Esophagus squamous epithelium (tissue), 5 donors: ENCODE measurements at regions of chr16 and their contacts with region 1.

Region 1: DNA sequence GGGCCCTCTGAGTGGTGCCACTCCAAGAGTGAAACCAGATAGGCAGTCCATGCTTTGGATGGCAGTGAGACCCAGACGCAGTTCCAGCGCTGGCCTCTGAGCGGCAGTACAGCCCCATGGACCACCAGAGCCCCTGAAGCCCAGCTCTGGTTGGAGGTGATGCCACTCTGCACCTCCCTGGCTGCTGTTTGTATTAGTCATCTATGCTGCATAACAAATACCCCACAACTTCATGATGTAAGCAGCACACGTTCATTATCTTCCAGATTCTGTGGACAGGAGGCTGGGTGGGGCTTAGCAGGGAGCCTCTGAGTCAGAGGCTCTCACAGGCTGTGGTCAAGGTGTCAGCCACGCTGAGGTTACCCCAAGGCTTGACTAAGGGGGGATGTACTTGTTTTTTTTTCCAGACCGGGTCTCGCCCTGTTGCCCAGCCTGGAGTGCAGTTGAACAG is 5.1 kb upstream of the NME4 start:
- DNase-seq: no peak
- H3K4me3 ChIP-seq: no peak overlapping the region
- H3K27ac ChIP-seq: no peak overlapping the region
- H3K4me1 ChIP-seq: peaks cover 0 to 22% (median 0%) of the 10 kb centered on the region in 3 donors
- H3K27me3 ChIP-seq: no peaks in the 10 kb centered on the region
- CTCF ChIP-seq: peak in 5 of 6 experiments; percentile 43 to 78 (median 59)
- POLR2A ChIP-seq: no peak

Region 2: DNA sequence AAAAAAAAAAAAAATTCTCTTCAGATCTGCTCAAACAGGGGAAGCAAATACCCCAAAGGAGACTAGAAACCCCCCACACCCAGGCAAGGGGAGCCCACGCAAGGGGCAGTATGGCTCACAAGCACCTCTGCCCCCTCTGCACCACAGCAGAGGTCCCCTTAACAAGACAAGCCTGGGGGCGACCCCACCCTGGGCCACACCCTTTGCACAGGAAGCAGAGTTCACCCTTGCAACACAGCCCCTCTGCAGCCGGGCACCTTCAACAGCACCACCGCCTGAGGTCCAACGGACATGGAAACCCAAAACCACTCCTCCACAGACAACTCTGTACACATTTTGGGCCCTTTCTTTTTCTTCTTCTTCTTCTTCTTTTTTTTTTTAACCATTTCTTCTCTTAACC is 52.2 kb before region 1 on chr16:
- intact Hi-C with region 1: no loop called
- DNase-seq: no peak
- H3K4me3 ChIP-seq: no peak overlapping the region
- H3K27ac ChIP-seq: no peak overlapping the region
- H3K4me1 ChIP-seq: peaks cover 0 to 48% (median 8%) of the 10 kb centered on the region in 3 donors
- H3K27me3 ChIP-seq: no peaks in the 10 kb centered on the region
- CTCF ChIP-seq: no peak
- POLR2A ChIP-seq: no peak

Region 3: GRCh38 chr16:495127-495748 is 103.3 kb after region 1 on chr16:
- intact Hi-C with region 1: loop called (anchors 10 kb)
- DNase-seq: no peak
- H3K4me3 ChIP-seq: no peak overlapping the region
- H3K27ac ChIP-seq: no peak overlapping the region
- H3K4me1 ChIP-seq: no peaks in the 10 kb centered on the region
- H3K27me3 ChIP-seq: no peaks in the 10 kb centered on the region
- CTCF ChIP-seq: peak in 3 of 6 experiments; percentile 12 to 46 (median 12)
- POLR2A ChIP-seq: no peak

Region 4: DNA sequence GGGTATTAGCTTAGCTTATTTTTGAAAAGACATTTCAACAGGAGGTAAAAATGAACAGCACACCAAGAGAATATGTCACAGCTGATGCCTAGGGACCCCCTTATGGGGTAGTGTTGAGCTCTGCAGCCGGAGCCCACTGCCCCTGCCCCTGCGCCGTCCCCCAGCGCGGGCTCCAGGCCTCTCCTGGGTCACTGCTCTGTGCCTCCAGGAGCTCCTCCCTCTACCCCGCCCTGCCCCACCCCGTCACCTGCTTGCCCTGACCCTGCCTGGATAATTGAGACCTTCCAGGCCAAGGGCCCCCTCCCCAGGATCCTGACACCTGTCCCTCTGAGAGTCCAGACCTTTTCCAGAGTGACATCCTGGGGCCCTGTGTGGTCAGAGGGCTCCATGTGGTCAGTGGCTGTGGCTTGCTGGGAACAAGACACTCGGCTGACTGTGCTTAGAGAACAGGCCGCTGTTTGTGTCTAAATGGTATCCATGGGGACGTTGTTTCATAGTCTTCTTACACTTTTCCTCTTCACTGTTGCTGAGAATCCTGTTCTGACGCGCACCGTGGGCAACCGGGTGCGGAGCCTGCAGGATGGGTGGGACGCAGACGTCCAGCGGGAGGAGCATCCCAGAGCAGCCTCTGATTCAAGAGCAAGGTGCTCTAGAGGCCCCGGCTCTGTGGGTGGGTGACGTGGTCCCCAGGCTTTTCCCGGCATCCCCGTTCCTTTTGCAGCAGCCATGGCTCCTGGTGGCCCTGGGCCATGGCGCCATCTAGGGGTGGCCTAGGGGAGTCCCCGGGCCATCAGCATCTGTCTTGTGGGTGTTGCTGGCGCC is 218.8 kb after region 1 on chr16:
- intact Hi-C with region 1: no loop called
- DNase-seq: no peak
- H3K4me3 ChIP-seq: no peak overlapping the region
- H3K27ac ChIP-seq: peak overlapping the region in 2 of 4 donors; percentile 29 to 32
- H3K4me1 ChIP-seq: peaks cover 11 to 47% (median 12%) of the 10 kb centered on the region in 3 donors
- H3K27me3 ChIP-seq: no peaks in the 10 kb centered on the region
- CTCF ChIP-seq: peak; percentile 62 to 86 (median 71)
- POLR2A ChIP-seq: no peak

Region 5: GRCh38 chr16:920717-921116 is 528.8 kb after region 1 on chr16:
- intact Hi-C with region 1: no loop called
- DNase-seq: no peak
- H3K4me3 ChIP-seq: no peak overlapping the region
- H3K27ac ChIP-seq: peak overlapping the region in 3 of 4 donors; percentile 45 to 84 (median 68)
- H3K4me1 ChIP-seq: peaks cover 0 to 10% (median 4%) of the 10 kb centered on the region in 3 donors
- H3K27me3 ChIP-seq: no peaks in the 10 kb centered on the region
- CTCF ChIP-seq: no peak
- POLR2A ChIP-seq: no peak